Tibial artery (tissue), 4 donors: ENCODE measurements at regions of chr2 and their contacts with region 1.

Region 1: GRCh38 chr2:33210626-33211025 is 263.9 kb downstream of the LTBP1 start:
- DNase-seq: peak; percentile 60 to 85
- H3K4me3 ChIP-seq: no peak overlapping the region
- H3K27ac ChIP-seq: peak overlapping the region; percentile 85 to 90
- H3K4me1 ChIP-seq: peaks cover 0 to 98% (median 53%) of the 10 kb centered on the region in 4 donors
- H3K27me3 ChIP-seq: no peaks in the 10 kb centered on the region
- CTCF ChIP-seq: no peak

Region 2: DNA sequence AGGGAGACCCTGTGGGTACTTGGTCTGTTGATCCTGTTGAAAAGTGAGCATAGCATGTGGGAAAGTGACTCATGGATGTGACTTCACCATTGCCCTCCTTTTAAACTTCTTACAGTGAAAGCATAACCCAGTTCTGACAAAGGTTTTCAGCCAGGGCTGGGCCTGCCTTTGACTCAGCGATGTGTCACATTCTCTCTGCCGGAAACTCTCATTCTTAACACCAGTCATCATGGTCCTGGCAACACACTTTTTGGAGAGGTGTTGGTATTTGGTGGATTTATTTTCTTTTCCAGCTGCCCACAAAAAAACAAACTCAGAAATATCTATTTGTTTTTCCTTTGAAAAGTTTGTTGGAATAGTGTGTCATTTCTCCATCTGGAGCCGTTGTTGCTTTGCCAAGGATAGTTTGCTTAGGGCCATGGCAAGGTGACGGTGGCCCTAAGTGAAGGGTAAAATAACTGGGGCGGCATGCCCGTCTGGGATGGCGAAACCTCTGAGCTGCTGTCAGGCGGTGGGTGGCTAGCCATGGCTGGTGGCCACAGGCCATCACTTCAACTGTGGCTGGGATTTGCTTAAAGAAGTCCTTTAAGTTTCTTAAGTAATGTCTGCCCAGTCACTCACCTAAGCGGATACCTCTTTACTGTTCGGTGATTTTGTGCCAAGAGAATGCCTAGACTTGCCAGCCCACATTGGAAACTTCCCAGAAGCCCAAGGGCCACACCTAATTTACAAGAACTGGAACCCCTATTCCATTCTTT is 140.6 kb before region 1 on chr2:
- intact Hi-C with region 1: loop called (anchors 10 kb)
- DNase-seq: peak; percentile 88 to 91
- H3K4me3 ChIP-seq: peak overlapping the region in 1 of 2 donors; percentile 20
- H3K27ac ChIP-seq: peak overlapping the region; percentile 74 to 77
- H3K4me1 ChIP-seq: peaks cover 0 to 91% (median 32%) of the 10 kb centered on the region in 4 donors
- H3K27me3 ChIP-seq: no peaks in the 10 kb centered on the region
- CTCF ChIP-seq: no peak

Region 3: GRCh38 chr2:33145459-33145858 is 65.2 kb before region 1 on chr2:
- intact Hi-C with region 1: loop called (anchors 10 kb)
- DNase-seq: no peak
- H3K4me3 ChIP-seq: peak overlapping the region in 1 of 2 donors; percentile 0
- H3K27ac ChIP-seq: peak overlapping the region; percentile 83 to 86
- H3K4me1 ChIP-seq: peaks cover 0 to 100% (median 54%) of the 10 kb centered on the region in 4 donors
- H3K27me3 ChIP-seq: no peaks in the 10 kb centered on the region
- CTCF ChIP-seq: no peak

Region 4: GRCh38 chr2:33529771-33530351 is 319.2 kb after region 1 on chr2:
- intact Hi-C with region 1: no loop called
- DNase-seq: no peak
- H3K4me3 ChIP-seq: no peak overlapping the region
- H3K27ac ChIP-seq: no peak overlapping the region
- H3K4me1 ChIP-seq: peaks cover 0 to 17% (median 0%) of the 10 kb centered on the region in 4 donors
- H3K27me3 ChIP-seq: no peaks in the 10 kb centered on the region
- CTCF ChIP-seq: no peak